K562 (cell line): ENCODE measurements at regions of chr1 and their contacts with region 1.

Region 1: GRCh38 chr1:221543529-221544120 is 198.3 kb downstream of the DUSP10 start:
- DNase-seq: peak in 2 of 4 experiments; percentile 8 to 24
- ATAC-seq: peak; percentile 57; the same call in 2 of the 3 replicates
- H3K4me3 ChIP-seq: no peak overlapping the region
- H3K27ac ChIP-seq: no peak overlapping the region
- H3K4me1 ChIP-seq: no peaks in the 10 kb centered on the region
- H3K27me3 ChIP-seq: no peaks in the 10 kb centered on the region
- CTCF ChIP-seq: peak in 2 of 3 experiments; percentile 44 to 66; a peak in 2 of 6 replicates
- EP300 ChIP-seq: no peak
- POLR2A ChIP-seq: no peak
- RAD21 ChIP-seq: peak; percentile 85 to 90

Region 2: GRCh38 chr1:220999872-221000863 is 543.5 kb before region 1 on chr1:
- CTCF ChIA-PET with region 1: no interaction called
- POLR2A ChIA-PET with region 1: no interaction called
- in situ Hi-C with region 1: no loop called
- intact Hi-C with region 1: no loop called
- DNase-seq: no peak
- ATAC-seq: no peak
- H3K4me3 ChIP-seq: no peak overlapping the region
- H3K27ac ChIP-seq: no peak overlapping the region
- H3K4me1 ChIP-seq: no peaks in the 10 kb centered on the region
- H3K27me3 ChIP-seq: no peaks in the 10 kb centered on the region
- CTCF ChIP-seq: no peak
- EP300 ChIP-seq: no peak
- POLR2A ChIP-seq: no peak
- RAD21 ChIP-seq: no peak

Region 3: GRCh38 chr1:221858818-221859611 is 315.4 kb after region 1 on chr1:
- CTCF ChIA-PET with region 1: no interaction called
- POLR2A ChIA-PET with region 1: no interaction called
- in situ Hi-C with region 1: no loop called
- intact Hi-C with region 1: loop called (anchors 5 kb)
- DNase-seq: no peak
- ATAC-seq: no peak
- H3K4me3 ChIP-seq: no peak overlapping the region
- H3K27ac ChIP-seq: no peak overlapping the region
- H3K4me1 ChIP-seq: no peaks in the 10 kb centered on the region
- H3K27me3 ChIP-seq: peaks cover 0 to 6% of the 10 kb centered on the region in 2 experiments; a peak in 1 of 5 replicates
- CTCF ChIP-seq: no peak
- EP300 ChIP-seq: no peak
- POLR2A ChIP-seq: no peak
- RAD21 ChIP-seq: no peak

Region 4: GRCh38 chr1:222009105-222009730 is 465.6 kb after region 1 on chr1:
- CTCF ChIA-PET with region 1: no interaction called
- POLR2A ChIA-PET with region 1: no interaction called
- in situ Hi-C with region 1: no loop called
- intact Hi-C with region 1: loop called (anchors 5 kb)
- DNase-seq: peak; percentile 23 to 61 (median 30)
- ATAC-seq: peak; percentile 95
- H3K4me3 ChIP-seq: no peak overlapping the region
- H3K27ac ChIP-seq: no peak overlapping the region
- H3K4me1 ChIP-seq: no peaks in the 10 kb centered on the region
- H3K27me3 ChIP-seq: no peaks in the 10 kb centered on the region
- CTCF ChIP-seq: peak; percentile 38 to 61 (median 46); a peak in 4 of 6 replicates
- EP300 ChIP-seq: no peak
- POLR2A ChIP-seq: no peak
- RAD21 ChIP-seq: peak; percentile 73 to 86